Right ventricle myocardium inferior (tissue), 1 donor: ENCODE measurements at regions of chr11 and their contacts with region 1.

Region 1: GRCh38 chr11:64778508-64779346 is at the start of gene SF1:
- DNase-seq: peak; percentile 99
- ATAC-seq: peak; percentile 96
- total RNA-seq, gene SF1: 172 TPM

Region 2: GRCh38 chr11:64742889-64743590 is 35.7 kb before region 1 on chr11:
- intact Hi-C with region 1: loop called (anchors 2 kb)
- DNase-seq: peak; percentile 93
- ATAC-seq: peak; percentile 62

Region 3: GRCh38 chr11:64762674-64763525 is 15.8 kb before region 1 on chr11:
- intact Hi-C with region 1: loop called (anchors 2 kb)
- DNase-seq: no peak
- ATAC-seq: no peak